ENCODE measurements at regions of chr7 and their contacts with region 1.

Region 1: DNA sequence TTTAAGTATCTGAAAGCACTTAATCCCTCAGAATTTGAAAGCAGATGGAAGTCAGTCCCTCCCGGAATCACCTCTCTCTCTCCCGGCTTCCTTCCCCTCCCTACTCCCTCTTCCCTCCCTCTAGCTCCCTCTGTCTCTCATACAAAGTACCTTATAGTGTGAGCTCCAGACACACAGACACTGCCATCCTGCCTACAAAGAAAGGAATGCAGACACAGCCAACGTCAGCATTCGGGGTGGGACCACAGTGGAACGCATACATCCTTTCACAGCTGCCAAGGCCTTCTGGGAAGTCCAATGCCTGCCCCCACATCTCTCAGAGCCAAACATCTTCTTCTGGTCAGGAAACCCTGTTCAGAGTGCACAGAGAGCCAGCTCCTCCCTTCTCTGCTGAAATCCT is 9.3 kb downstream of the NOD1 start:
- DNase-seq: peak; percentile 96
- H3K4me3 Mint-ChIP-seq: peak overlapping the region; percentile 64
- H3K27ac Mint-ChIP-seq: peak overlapping the region; percentile 98
- H3K4me1 Mint-ChIP-seq: peaks cover 27% of the 10 kb centered on the region
- H3K27me3 Mint-ChIP-seq: no peaks in the 10 kb centered on the region
- CTCF ChIP-seq: peak; percentile 32

Region 2: DNA sequence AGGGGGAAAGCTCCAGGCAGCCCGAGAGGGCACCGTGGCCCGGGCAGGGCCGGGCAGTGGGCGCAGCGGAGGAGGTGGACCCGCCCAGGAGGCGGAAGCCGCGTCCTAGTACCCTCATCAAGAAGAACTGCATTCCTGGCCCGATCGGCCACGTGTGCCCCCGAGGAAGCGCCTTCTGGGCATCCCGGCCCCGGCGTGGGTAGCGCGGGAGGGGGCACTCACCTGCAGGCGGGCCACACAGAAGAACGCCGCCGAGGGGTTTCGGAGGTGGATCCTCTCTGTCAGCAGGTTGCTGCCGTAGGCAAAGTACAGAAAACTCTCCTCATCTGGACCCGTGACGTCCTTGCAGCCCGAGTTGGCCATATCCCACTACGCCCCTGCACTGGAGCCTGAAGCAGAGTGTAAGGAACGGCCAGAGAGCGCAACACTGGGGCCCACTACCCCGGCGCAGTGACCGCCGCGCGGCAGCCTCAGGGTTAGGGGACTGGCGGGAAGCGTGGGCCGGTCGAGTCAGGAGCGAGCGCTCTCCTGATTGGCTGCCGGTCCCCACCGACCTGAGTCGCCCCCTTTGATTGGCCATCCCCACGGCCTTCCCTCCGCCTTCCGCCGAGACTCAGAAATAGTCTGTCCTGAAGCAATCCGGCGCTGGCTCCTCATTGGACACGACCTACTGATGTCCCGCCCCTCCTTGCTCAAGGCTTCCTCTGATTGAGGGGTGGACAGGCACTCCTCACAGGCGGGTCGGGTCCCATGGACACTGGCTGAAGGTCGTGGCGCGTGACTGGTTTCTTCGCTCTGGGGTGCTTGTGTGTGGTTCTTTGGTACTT is 35.3 kb after region 1 on chr7 and contains the start of gene GGCT:
- CTCF ChIA-PET with region 1: interaction called, 3 read pairs
- POLR2A ChIA-PET with region 1: interaction called, 10 read pairs
- intact Hi-C with region 1: no loop called
- DNase-seq: peak; percentile 99
- H3K4me3 Mint-ChIP-seq: peak within 1 kb of the TSS; percentile 83
- H3K27ac Mint-ChIP-seq: peak within 1 kb of the TSS; percentile 77
- H3K4me1 Mint-ChIP-seq: peaks cover 30% of the 10 kb centered on the region
- H3K27me3 Mint-ChIP-seq: no peaks in the 10 kb centered on the region
- CTCF ChIP-seq: no peak
- total RNA-seq, gene GGCT: 48.3 and 64.8 TPM in 2 replicates

Measured in MCF 10A (cell line).